ENCODE measurements at regions of chr21 and their contacts with region 1.

Region 1: GRCh38 chr21:45140346-45140940 is 66.1 kb downstream of the ADARB1 start:
- DNase-seq: no peak
- ATAC-seq: peak; percentile 97
- H3K4me3 ChIP-seq: no peak overlapping the region
- H3K27ac ChIP-seq: no peak overlapping the region
- H3K4me1 ChIP-seq: 0 out of 2 replicates have a peak, but pooled peaks cover 3% of the 10 kb centered on the region
- H3K27me3 ChIP-seq: no peaks in the 10 kb centered on the region
- CTCF ChIP-seq: peak; percentile 84

Region 2: DNA sequence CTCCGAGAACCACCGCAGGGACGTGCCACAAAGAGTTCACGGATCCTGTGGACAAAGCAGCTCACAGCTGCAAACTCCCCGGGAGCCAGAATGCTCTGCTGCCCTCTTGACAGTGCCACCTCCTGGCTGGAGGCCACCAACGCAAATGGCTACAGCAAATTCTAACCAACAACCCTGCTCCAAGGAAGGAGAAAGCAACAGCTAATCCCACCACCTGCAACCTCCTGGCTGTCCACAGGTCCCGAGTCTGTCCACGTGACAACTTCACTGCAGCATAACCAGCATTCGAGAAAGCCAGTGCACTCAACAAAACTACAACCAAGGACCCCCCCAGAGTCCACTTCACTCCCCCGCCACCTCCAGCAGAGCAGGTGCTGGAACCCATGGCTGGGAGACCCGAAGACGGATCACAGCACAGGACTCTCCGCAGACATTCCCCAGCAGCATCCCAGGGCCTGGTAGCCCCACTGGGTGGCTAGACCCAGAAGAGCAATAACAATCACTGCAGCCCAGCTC is 129.9 kb after region 1 on chr21:
- CTCF ChIA-PET with region 1: interaction called, 3 read pairs
- POLR2A ChIA-PET with region 1: no interaction called
- in situ Hi-C with region 1: no loop called
- intact Hi-C with region 1: loop called (anchors 10 kb)
- DNase-seq: no peak
- ATAC-seq: peak; percentile 69; the same call in 1 of the 2 replicates
- H3K4me3 ChIP-seq: no peak overlapping the region
- H3K27ac ChIP-seq: no peak overlapping the region
- H3K4me1 ChIP-seq: no peaks in the 10 kb centered on the region
- H3K27me3 ChIP-seq: no peaks in the 10 kb centered on the region
- CTCF ChIP-seq: peak; percentile 72

Region 3: GRCh38 chr21:45287438-45288391 is 147.3 kb after region 1 on chr21 and contains the start of gene POFUT2:
- CTCF ChIA-PET with region 1: interaction called, 11 read pairs
- POLR2A ChIA-PET with region 1: no interaction called
- in situ Hi-C with region 1: no loop called
- intact Hi-C with region 1: no loop called
- DNase-seq: no peak
- ATAC-seq: peak; percentile 83
- H3K4me3 ChIP-seq: peak within 1 kb of the TSS; percentile 52 to 58
- H3K27ac ChIP-seq: peak within 1 kb of the TSS; percentile 63
- H3K4me1 ChIP-seq: peaks cover 25% of the 10 kb centered on the region
- H3K27me3 ChIP-seq: no peaks in the 10 kb centered on the region
- CTCF ChIP-seq: no peak
- total RNA-seq, gene POFUT2: 59.6 TPM

Region 4: DNA sequence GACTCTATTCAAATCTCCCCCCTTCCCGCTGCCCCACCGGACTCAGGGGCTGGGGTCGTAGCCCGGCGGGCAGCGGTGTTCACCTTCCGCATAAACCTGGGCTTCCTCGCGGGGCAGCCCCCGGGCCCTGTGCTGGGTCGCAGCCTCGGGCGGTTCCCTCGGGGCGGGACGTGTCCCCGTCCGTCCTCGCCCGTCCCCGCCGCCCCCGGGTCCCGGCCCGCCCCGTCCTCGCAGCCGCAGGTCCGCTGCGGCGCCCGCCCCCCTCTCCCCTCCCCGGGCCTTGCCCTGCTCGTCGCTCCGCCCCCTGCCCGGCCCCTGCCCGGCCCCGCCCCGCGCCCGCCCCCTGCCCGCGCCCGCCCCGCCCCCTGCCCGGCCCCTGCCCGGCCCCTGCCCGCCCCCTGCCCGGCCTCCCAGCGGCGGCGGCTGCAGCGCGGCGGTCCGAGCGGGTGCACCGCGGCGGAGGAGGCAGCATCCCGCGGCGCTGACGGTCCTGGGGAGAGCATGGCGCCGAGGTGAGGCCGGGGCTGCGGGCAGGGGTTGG is 264.4 kb after region 1 on chr21 and contains the start of gene COL18A1:
- CTCF ChIA-PET with region 1: no interaction called
- POLR2A ChIA-PET with region 1: no interaction called
- in situ Hi-C with region 1: no loop called
- intact Hi-C with region 1: no loop called
- DNase-seq: no peak
- ATAC-seq: peak; percentile 66
- H3K4me3 ChIP-seq: peak within 1 kb of the TSS; percentile 60 to 80
- H3K27ac ChIP-seq: peak within 1 kb of the TSS; percentile 96
- H3K4me1 ChIP-seq: peaks cover 27% of the 10 kb centered on the region
- H3K27me3 ChIP-seq: no peaks in the 10 kb centered on the region
- CTCF ChIP-seq: no peak
- total RNA-seq, gene COL18A1: 676 TPM

Measured in Panc1 (cell line).